HCT116 (cell line): ENCODE measurements at regions of chr2 and their contacts with region 1.

Region 1: DNA sequence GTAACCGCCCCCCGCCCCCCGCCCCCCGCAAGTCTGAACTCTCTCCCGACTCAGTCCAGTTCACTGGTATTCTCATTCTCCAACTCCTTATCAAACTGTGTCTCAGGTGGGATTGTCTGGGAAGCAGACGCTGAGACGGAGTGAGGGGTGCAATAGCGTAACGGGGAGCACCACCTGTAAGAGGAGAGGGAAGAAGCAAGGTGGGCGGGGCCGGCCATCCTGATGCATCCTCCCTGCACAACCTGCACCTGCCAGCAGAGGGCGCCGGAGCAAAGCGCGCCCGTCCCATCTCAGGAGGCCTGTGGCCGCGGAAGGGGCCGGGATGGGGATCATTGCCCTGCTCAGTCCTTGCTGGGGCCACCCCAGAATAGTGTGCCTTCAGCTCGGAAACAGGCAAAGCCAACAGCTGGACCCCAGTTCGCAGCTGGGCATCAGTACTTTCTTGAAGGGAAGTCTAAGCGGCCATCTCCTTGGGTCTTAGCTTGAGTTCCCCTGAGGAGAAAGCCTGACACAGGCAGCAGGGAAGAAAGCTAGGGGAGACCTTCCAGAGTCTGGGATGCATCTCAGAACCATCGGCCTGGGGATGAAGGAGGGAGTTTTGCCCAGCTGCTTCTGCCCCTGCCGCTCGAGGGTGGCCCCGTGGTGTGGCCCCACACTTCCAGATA is 208.0 kb downstream of the TFCP2L1 start:
- DNase-seq: peak; percentile 42
- ATAC-seq: peak; percentile 66
- H3K4me3 ChIP-seq: 0 out of 4 replicates have a peak overlapping the region, but pooled peaks of 1 of the 2 experiments have one; percentile 5
- H3K27ac ChIP-seq: no peak overlapping the region
- H3K4me1 ChIP-seq: peaks cover 5 to 40% of the 10 kb centered on the region in 2 experiments; a peak in 3 of 4 replicates
- H3K27me3 ChIP-seq: no peaks in the 10 kb centered on the region
- CTCF ChIP-seq: peak; percentile 66 to 98 (median 97); a peak in 5 of 6 replicates
- POLR2A ChIP-seq: no peak
- RAD21 ChIP-seq: peak; percentile 44

Region 2: DNA sequence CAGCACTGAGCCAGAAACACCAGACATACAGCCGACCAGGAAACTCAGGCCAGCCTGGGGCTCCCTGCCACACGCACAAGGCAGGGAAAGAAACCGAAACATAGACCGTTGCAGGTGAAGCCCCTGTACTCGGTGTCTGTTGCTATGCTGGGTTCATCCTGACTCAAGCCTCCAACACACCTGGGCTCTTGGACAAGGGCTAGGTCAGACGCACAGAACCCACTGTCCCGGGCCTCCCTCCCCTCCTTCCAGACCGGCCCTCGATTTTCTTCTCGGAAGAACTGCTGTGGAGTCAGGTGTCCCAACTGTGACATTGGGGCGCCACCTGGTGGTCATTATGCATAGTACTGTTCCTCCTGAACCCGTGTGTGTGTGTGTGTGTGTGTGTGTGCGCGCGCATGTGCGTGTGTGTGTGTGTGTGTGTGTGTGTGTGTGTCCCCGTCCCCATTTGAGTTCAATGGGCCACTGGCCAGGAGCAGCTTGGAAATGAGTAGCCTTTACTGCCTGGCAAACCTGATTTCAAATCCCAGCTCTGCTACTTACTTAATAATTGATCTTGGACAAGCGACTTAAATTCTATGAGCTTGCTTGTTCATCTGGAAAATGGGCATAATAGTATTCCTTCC is 396.8 kb before region 1 on chr2:
- CTCF ChIA-PET with region 1: interaction called, 6 read pairs
- POLR2A ChIA-PET with region 1: interaction called, 24 read pairs
- RAD21 ChIA-PET with region 1: no interaction called
- intact Hi-C with region 1: no loop called
- DNase-seq: peak; percentile 80
- ATAC-seq: peak; percentile 82
- H3K4me3 ChIP-seq: no peak overlapping the region
- H3K27ac ChIP-seq: no peak overlapping the region
- H3K4me1 ChIP-seq: peaks cover 0 to 10% of the 10 kb centered on the region in 2 experiments; a peak in 2 of 4 replicates
- H3K27me3 ChIP-seq: no peaks in the 10 kb centered on the region
- CTCF ChIP-seq: peak; percentile 65 to 83 (median 65)
- POLR2A ChIP-seq: no peak
- RAD21 ChIP-seq: peak; percentile 92

Region 3: DNA sequence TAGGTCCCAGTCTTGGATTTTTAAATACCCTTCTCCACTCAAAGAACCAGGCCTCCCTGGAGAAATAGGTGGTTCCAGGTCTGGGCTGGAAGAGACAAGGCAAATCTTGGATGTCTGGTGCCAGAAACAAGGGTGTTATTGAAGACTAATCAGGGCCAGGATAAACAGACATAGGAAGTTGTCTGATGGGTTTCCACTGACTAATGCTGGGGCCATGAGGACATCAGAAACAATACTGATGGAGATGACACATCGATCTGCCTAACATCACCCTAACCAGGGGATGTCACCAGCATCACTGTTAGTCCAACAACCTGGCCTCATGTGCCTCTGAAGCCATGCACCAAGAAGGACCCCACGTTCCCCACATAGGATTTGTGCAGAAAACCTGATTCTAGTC is 383.9 kb before region 1 on chr2:
- CTCF ChIA-PET with region 1: interaction called, 65 read pairs
- POLR2A ChIA-PET with region 1: interaction called, 100 read pairs
- RAD21 ChIA-PET with region 1: interaction called, 11 read pairs
- intact Hi-C with region 1: loop called (anchors 1 kb)
- DNase-seq: no peak
- ATAC-seq: no peak
- H3K4me3 ChIP-seq: no peak overlapping the region
- H3K27ac ChIP-seq: no peak overlapping the region
- H3K4me1 ChIP-seq: peaks cover 0 to 7% of the 10 kb centered on the region in 2 experiments; a peak in 1 of 4 replicates
- H3K27me3 ChIP-seq: no peaks in the 10 kb centered on the region
- CTCF ChIP-seq: no peak
- POLR2A ChIP-seq: no peak
- RAD21 ChIP-seq: no peak

Region 4: DNA sequence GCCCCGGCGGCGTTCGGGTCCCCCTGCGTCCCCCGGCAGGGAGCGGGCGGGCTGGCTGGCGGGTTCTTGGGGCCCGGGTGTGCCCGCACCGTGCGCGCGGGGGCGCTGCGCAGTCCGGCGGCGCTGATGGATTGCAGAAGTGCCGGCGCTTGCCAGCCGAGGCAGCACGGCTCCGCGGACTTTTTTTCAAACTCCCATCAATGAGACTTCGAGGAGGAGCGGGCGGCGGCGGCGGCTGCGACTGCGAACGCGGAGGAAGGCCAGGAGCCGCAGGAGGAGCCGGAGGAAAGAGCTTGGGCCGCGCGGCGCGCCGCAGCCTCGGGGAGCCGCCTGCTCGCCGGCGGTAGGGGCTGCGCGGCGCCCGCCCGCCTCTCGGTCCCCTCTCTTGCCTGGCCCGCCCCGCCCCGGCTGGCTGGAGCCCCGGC is 341.3 kb before region 1 on chr2 and contains the start of gene GLI2:
- CTCF ChIA-PET with region 1: interaction called, 4 read pairs
- POLR2A ChIA-PET with region 1: interaction called, 29 read pairs
- RAD21 ChIA-PET with region 1: interaction called in 1 of 2 experiments, 3 read pairs
- intact Hi-C with region 1: no loop called
- DNase-seq: peak; percentile 65
- ATAC-seq: peak; percentile 87
- H3K4me3 ChIP-seq: peak within 1 kb of the TSS; percentile 60 to 64
- H3K27ac ChIP-seq: peak within 1 kb of the TSS; percentile 45; the same call in 1 of the 2 replicates
- H3K4me1 ChIP-seq: peaks cover 11 to 34% of the 10 kb centered on the region in 2 experiments
- H3K27me3 ChIP-seq: peaks cover 8% of the 10 kb centered on the region; the same call in 1 of the 2 replicates
- CTCF ChIP-seq: peak; percentile 64 to 88 (median 70)
- POLR2A ChIP-seq: no peak
- RAD21 ChIP-seq: peak; percentile 71
- total RNA-seq, gene GLI2: 3.4 TPM

Region 5: DNA sequence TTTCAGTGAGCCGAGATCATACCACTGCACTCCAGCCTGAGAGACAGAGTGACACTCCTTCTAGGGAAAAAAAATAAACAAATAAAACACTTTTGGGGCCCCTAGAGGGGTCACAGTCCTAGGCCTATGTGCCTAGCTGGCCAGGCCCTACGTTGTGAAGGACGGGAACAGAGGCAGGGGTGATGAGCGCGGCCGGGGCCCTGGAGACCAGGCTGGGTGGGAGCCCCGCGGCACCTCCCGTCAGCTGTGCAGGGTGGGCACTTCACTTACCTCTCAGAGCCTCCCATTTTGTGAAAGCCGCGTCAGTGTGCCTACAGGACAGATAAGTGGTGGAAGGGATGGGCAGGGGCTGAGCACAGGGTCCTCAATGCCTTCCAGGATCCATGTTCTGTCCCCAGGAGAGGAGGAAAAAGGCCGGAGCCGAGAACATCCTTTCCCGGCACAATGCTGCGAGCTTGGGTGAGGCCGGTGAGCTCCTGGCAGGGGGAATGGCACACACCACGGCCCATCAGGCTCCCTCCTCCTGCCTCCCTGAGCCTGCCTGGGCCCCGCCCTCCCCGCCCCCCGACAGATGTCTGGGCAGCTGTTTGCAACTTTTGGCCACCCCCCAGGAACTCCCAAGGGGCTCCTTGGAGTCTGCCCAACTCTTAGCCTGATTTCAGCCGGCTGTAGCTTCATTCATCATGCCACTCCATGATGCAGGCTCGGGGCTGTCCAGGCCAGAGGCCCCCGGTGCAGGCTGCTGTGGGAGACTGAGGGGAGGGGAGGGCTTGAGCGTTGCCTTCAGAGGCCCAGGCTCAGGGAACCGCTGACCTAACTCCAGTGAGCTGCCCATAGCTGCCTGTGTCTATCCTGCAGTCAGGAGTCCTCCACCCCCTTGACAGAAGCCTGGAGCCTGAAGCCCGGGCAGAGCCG is 11.5 kb after region 1 on chr2:
- CTCF ChIA-PET with region 1: interaction called, 11 read pairs
- POLR2A ChIA-PET with region 1: interaction called, 13 read pairs
- RAD21 ChIA-PET with region 1: no interaction called
- intact Hi-C with region 1: no loop called
- DNase-seq: no peak
- ATAC-seq: no peak
- H3K4me3 ChIP-seq: no peak overlapping the region
- H3K27ac ChIP-seq: no peak overlapping the region
- H3K4me1 ChIP-seq: no peaks in the 10 kb centered on the region
- H3K27me3 ChIP-seq: no peaks in the 10 kb centered on the region
- CTCF ChIP-seq: no peak
- POLR2A ChIP-seq: no peak
- RAD21 ChIP-seq: no peak

Region 6: DNA sequence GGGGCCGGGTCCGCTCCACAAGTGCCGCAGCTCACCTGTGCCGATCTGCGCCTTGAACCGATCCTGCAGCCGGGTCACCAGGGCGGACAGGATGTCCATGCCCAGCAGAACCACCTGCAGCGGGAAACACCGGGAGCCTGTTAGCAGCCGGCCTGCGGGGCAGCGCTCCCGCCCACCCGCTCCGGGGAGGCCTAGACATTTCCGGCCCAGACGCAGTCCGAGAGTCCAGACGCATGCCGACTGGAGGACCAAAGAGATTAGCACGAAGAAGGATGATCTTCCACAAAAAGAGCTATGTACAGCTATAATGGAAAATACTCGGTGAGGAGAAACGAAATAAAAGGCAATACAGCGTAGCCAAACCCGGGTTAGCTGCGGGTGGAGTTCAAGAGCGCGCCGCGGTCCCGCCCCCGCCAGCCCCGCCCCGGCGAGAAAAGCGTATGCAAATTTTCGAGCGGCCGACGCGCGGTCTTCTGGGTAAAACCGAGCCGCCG is 453.2 kb after region 1 on chr2:
- CTCF ChIA-PET with region 1: no interaction called
- POLR2A ChIA-PET with region 1: interaction called, 46 read pairs
- RAD21 ChIA-PET with region 1: no interaction called
- intact Hi-C with region 1: loop called (anchors 5 kb)
- DNase-seq: peak; percentile 72
- ATAC-seq: peak; percentile 77
- H3K4me3 ChIP-seq: peak overlapping the region; percentile 66 to 70
- H3K27ac ChIP-seq: peak overlapping the region; percentile 77
- H3K4me1 ChIP-seq: peaks cover 15 to 31% of the 10 kb centered on the region in 2 experiments
- H3K27me3 ChIP-seq: no peaks in the 10 kb centered on the region
- CTCF ChIP-seq: no peak
- POLR2A ChIP-seq: no peak
- RAD21 ChIP-seq: no peak

Region 7: GRCh38 chr2:121710470-121711170 is 633.6 kb after region 1 on chr2:
- CTCF ChIA-PET with region 1: no interaction called
- POLR2A ChIA-PET with region 1: no interaction called
- RAD21 ChIA-PET with region 1: no interaction called
- intact Hi-C with region 1: loop called (anchors 10 kb)
- DNase-seq: no peak
- ATAC-seq: no peak
- H3K4me3 ChIP-seq: no peak overlapping the region
- H3K27ac ChIP-seq: no peak overlapping the region
- H3K4me1 ChIP-seq: peaks cover 3 to 14% of the 10 kb centered on the region in 2 experiments; a peak in 2 of 4 replicates
- H3K27me3 ChIP-seq: no peaks in the 10 kb centered on the region
- CTCF ChIP-seq: no peak
- POLR2A ChIP-seq: no peak
- RAD21 ChIP-seq: no peak